ENCODE measurements at regions of chr2 and their contacts with region 1.

Region 1: GRCh38 chr2:226799181-226799975 is at the start of gene IRS1:
- DNase-seq: peak; percentile 50
- H3K4me3 Mint-ChIP-seq: peak within 1 kb of the TSS; percentile 87
- H3K27ac Mint-ChIP-seq: peak within 1 kb of the TSS; percentile 55
- H3K4me1 Mint-ChIP-seq: peaks cover 36% of the 10 kb centered on the region
- H3K27me3 Mint-ChIP-seq: peaks cover 11% of the 10 kb centered on the region
- total RNA-seq, gene IRS1: 3.8 and 4.2 TPM in 2 replicates

Region 2: DNA sequence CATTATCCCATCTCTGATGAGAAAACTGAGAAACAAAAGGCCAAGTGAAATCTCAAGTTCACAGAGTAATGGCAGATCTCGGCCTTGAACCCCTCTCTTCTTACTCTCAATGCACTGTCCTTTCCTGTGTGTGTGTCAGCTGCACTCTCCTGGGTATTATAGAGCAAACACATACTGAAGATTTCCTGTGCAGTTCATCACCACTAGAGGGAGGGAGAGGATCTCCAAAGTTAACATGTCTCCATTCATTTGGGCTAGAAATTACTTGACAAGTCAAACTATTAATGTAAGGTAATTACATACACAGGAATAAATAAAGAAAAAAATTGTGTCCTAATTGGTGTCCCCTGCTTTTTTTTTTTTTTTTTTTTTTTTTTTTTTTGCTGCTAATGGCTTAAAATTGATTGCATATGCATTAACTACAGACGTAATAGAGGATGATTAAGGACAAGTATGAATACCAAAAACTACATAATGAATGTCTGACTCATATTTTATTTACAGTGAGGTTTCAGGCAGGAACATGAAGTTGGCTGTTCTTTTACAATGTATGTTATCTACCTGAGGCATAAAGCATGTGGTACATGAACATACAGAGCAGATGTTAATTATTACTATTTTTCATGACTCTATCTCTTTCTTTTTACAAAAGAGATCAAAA is 1130.6 kb before region 1 on chr2:
- intact Hi-C with region 1: loop called (anchors 1 kb)
- DNase-seq: no peak
- H3K4me3 Mint-ChIP-seq: no peak overlapping the region
- H3K27ac Mint-ChIP-seq: no peak overlapping the region
- H3K4me1 Mint-ChIP-seq: no peaks in the 10 kb centered on the region
- H3K27me3 Mint-ChIP-seq: peaks cover 5% of the 10 kb centered on the region

Region 3: DNA sequence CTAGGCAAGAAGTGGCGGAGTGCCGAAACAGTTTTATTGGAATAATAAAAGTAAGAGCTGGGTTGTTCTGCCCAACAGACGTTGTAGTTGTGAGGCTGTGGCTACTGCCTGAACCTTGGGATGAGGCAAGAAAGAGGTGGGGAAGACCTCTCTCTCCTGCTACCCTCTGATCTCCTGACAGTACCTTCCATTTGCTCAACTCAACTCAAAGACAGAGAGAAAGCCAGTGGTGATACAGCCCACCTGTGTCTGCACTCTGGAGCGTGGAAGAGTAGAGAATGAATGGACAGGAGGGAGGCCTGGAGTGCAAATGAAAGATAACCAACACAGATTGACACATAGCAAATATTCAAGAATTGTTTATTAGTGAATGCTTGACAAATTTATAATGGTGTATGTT is 809.6 kb before region 1 on chr2:
- intact Hi-C with region 1: loop called (anchors 5 kb)
- DNase-seq: no peak
- H3K4me3 Mint-ChIP-seq: no peak overlapping the region
- H3K27ac Mint-ChIP-seq: no peak overlapping the region
- H3K4me1 Mint-ChIP-seq: no peaks in the 10 kb centered on the region
- H3K27me3 Mint-ChIP-seq: no peaks in the 10 kb centered on the region

Region 4: DNA sequence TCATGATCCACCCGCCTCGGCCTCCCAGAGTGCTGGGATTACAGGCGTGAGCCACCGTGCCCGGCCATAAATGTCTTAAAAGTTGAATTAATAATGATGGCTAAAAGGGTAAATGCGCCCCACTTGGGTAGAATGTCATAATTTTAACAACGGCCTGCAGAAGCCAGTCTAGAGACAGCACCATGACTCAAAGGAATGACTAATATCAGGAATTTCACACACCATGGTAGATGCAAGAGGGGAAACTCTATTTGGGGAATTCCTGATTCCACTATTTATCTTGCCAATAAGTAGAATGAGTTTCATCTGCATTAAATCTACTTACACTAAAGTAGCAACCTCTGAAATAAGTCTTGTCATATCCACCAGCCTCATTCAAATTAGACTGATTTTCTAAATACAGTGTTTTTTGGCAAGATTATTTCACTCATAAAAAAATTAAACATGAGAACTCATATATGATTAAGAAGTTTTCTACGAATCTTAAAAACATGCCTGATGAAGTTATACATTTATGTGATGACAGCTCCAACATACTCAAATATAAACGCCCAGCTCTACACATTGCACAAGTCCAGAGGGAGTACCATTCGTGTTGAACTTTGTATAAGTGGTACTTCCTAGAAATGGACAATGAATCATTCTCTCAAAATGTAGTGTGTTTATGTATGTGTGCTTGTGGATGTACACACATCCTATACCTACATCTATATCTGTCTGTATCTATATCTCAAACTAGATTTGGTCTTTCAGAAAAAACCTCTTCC is 309.4 kb before region 1 on chr2:
- intact Hi-C with region 1: loop called (anchors 5 kb)
- DNase-seq: no peak
- H3K4me3 Mint-ChIP-seq: no peak overlapping the region
- H3K27ac Mint-ChIP-seq: no peak overlapping the region
- H3K4me1 Mint-ChIP-seq: no peaks in the 10 kb centered on the region
- H3K27me3 Mint-ChIP-seq: peaks cover 4% of the 10 kb centered on the region

Region 5: DNA sequence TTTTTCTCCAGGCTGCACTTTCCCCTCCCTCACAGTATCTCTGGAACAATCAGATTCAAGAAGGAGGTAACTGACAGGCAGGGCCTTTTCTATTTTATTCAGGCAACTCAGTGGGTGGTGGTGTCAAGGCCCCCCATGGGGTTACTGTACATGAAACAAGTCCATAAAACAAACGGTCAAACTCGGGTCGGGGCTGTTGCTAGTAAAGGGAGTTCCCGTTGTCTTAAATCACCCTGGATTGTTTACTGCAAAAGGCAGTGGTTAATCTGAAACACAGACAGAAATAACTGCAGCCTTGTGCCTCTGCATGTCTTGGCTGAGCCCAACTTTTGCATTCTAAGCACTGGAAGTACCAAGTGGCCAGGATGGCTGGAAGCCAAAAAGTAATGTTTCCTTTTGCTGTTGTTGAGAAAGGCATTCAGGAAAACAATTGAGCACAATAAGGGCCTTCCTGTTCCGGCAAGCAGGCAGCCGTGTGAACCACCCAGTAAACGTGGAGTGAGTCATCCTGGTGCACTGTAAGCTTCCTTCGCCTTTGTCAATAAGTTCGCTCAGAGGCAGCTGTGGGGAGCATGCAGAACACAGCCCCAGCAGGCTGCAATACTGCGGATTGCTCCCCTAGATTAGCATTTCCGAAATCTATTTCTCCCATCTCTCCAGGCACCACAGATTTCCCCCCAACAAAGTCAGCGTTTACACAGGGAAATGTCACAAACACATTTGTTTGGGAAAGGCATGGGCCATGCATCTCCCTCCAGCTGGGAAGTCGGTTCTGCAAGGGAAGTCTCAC is 149.3 kb before region 1 on chr2:
- intact Hi-C with region 1: loop called (anchors 2 kb)
- DNase-seq: peak; percentile 60
- H3K4me3 Mint-ChIP-seq: peak overlapping the region; percentile 59
- H3K27ac Mint-ChIP-seq: peak overlapping the region; percentile 95
- H3K4me1 Mint-ChIP-seq: peaks cover 63% of the 10 kb centered on the region
- H3K27me3 Mint-ChIP-seq: no peaks in the 10 kb centered on the region

Region 6: DNA sequence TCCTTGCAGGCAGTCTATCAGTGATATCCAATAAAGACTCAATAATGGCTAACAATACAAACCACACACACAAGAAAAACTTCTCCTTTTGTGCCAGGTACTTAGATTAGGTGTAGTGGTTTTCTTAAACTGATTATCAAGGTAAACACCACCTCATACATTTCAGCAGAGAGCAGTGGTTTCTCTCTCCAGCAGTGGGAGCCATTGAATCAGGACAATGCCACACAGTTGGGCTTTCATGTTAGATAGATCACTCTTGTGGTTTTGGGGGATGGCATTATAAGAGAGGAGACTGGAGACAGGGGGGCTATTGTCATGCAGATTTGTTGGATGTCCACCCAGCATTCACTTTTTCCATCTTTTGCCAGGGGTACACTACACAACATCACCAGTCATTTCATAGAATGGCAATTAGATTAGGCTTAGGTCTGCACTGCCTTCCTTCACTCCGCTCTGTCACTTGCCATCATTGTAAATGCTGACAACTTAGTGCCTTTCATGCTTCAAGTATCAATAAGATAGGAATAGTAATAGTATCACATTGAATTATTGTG is 13.8 kb after region 1 on chr2:
- intact Hi-C with region 1: loop called (anchors 1 kb)
- DNase-seq: no peak
- H3K4me3 Mint-ChIP-seq: no peak overlapping the region
- H3K27ac Mint-ChIP-seq: no peak overlapping the region
- H3K4me1 Mint-ChIP-seq: no peaks in the 10 kb centered on the region
- H3K27me3 Mint-ChIP-seq: peaks cover 34% of the 10 kb centered on the region

Region 7: GRCh38 chr2:226984750-226985582 is 185.6 kb after region 1 on chr2:
- intact Hi-C with region 1: loop called (anchors 1 kb)
- DNase-seq: peak; percentile 9
- H3K4me3 Mint-ChIP-seq: no peak overlapping the region
- H3K27ac Mint-ChIP-seq: no peak overlapping the region
- H3K4me1 Mint-ChIP-seq: peaks cover 21% of the 10 kb centered on the region
- H3K27me3 Mint-ChIP-seq: no peaks in the 10 kb centered on the region

Measured in activated T-helper 1 cell treated with anti-CD3 and anti-CD28 coated beads, Interleukin-12 subunit alpha, Interleukin-12 subunit beta, Interleukin-2, Interleukin-4 antibody, amounts not matched to agents 30 ng/mL and 10 ng/mL and 1 ng/mL, durations not matched to agents 14 hours and 24 hours and 36 hours (primary cell).